Endothelial cell of umbilical vein (primary cell): ENCODE measurements at regions of chr5 and their contacts with region 1.

Region 1: GRCh38 chr5:34486160-34486848 is 169.8 kb upstream of the RAI14 start:
- DNase-seq: peak; percentile 87
- H3K4me3 ChIP-seq: no peak overlapping the region
- H3K27ac ChIP-seq: peak overlapping the region; percentile 78
- H3K4me1 ChIP-seq: peaks cover 19% of the 10 kb centered on the region
- H3K27me3 ChIP-seq: peaks cover 0 to 7% of the 10 kb centered on the region in 2 experiments
- CTCF ChIP-seq: peak; percentile 68 to 78
- POLR2A ChIP-seq: no peak

Region 2: DNA sequence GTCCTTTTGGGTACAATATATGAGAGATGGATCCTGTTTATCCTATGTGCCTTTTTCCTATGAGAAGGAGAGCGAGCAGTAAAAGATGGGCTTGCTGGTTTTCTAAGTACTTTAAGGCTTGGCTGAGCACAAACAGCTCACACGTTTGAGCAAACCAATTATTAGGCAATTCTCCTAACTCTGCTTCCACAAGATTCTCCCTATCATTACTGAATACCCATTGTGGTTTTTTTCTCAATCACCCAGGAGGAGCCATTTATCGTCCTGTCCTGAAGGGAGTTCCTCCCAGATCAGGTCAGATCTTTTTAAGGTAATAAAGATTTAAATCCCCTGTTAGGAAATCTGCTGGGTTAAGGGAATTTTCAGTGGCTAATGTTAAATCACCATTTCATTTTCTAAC is 423.9 kb before region 1 on chr5:
- CTCF ChIA-PET with region 1: no interaction called
- POLR2A ChIA-PET with region 1: no interaction called
- dilution Hi-C with region 1: no loop called
- intact Hi-C with region 1: no loop called
- DNase-seq: no peak
- H3K4me3 ChIP-seq: no peak overlapping the region
- H3K27ac ChIP-seq: no peak overlapping the region
- H3K4me1 ChIP-seq: no peaks in the 10 kb centered on the region
- H3K27me3 ChIP-seq: no peaks in the 10 kb centered on the region
- CTCF ChIP-seq: no peak
- POLR2A ChIP-seq: no peak

Region 3: GRCh38 chr5:34452170-34452830 is 34.0 kb before region 1 on chr5:
- CTCF ChIA-PET with region 1: no interaction called
- POLR2A ChIA-PET with region 1: no interaction called
- dilution Hi-C with region 1: no loop called
- intact Hi-C with region 1: no loop called
- DNase-seq: peak; percentile 9
- H3K4me3 ChIP-seq: no peak overlapping the region
- H3K27ac ChIP-seq: no peak overlapping the region
- H3K4me1 ChIP-seq: no peaks in the 10 kb centered on the region
- H3K27me3 ChIP-seq: peaks cover 16 to 19% of the 10 kb centered on the region in 2 experiments
- CTCF ChIP-seq: peak in 1 of 2 donors; percentile 40
- POLR2A ChIP-seq: no peak

Region 4: DNA sequence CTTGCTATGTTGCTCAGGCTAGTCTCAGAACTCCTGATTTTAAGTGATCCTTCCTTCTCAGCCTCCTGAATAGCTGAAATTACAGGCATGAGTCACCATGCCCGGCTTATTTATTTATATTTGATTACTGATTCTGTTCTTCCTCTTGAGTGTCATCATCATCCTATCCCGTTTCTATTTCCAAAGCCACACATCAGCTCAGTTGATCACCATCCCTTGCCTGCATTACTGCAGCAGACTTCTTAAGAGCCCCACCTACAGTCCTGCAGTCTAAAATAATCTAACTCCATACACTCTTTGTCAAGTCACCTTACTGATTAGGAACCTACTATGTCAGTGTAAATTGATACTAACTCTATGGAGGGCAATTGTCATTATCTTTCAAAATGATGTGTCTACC is 30.9 kb after region 1 on chr5:
- CTCF ChIA-PET with region 1: interaction called, 13 read pairs
- POLR2A ChIA-PET with region 1: no interaction called
- dilution Hi-C with region 1: no loop called
- intact Hi-C with region 1: loop called (anchors 1 kb)
- DNase-seq: peak; percentile 69
- H3K4me3 ChIP-seq: no peak overlapping the region
- H3K27ac ChIP-seq: peak overlapping the region; percentile 58
- H3K4me1 ChIP-seq: peaks cover 19% of the 10 kb centered on the region
- H3K27me3 ChIP-seq: no peaks in the 10 kb centered on the region
- CTCF ChIP-seq: no peak
- POLR2A ChIP-seq: no peak

Region 5: GRCh38 chr5:34587355-34588241 is 101.3 kb after region 1 on chr5:
- CTCF ChIA-PET with region 1: interaction called, 11 read pairs
- POLR2A ChIA-PET with region 1: interaction called, 3 read pairs
- dilution Hi-C with region 1: no loop called
- intact Hi-C with region 1: loop called (anchors 1 kb)
- DNase-seq: peak; percentile 70
- H3K4me3 ChIP-seq: no peak overlapping the region
- H3K27ac ChIP-seq: peak overlapping the region; percentile 99
- H3K4me1 ChIP-seq: peaks cover 60% of the 10 kb centered on the region
- H3K27me3 ChIP-seq: no peaks in the 10 kb centered on the region
- CTCF ChIP-seq: no peak
- POLR2A ChIP-seq: no peak

Region 6: GRCh38 chr5:34695275-34696027 is 209.1 kb after region 1 on chr5:
- CTCF ChIA-PET with region 1: interaction called, 4 read pairs
- POLR2A ChIA-PET with region 1: no interaction called
- dilution Hi-C with region 1: no loop called
- intact Hi-C with region 1: loop called (anchors 2 kb)
- DNase-seq: no peak
- H3K4me3 ChIP-seq: no peak overlapping the region
- H3K27ac ChIP-seq: peak overlapping the region; percentile 2
- H3K4me1 ChIP-seq: peaks cover 26% of the 10 kb centered on the region
- H3K27me3 ChIP-seq: no peaks in the 10 kb centered on the region
- CTCF ChIP-seq: no peak
- POLR2A ChIP-seq: no peak

Region 7: GRCh38 chr5:34838785-34839714 is 352.7 kb after region 1 on chr5 and contains the start of gene TTC23L:
- CTCF ChIA-PET with region 1: interaction called, 5 read pairs
- POLR2A ChIA-PET with region 1: no interaction called
- dilution Hi-C with region 1: no loop called
- intact Hi-C with region 1: loop called (anchors 2 kb)
- DNase-seq: peak; percentile 78
- H3K4me3 ChIP-seq: peak within 1 kb of the TSS; percentile 18 to 61 (median 42)
- H3K27ac ChIP-seq: no peak within 1 kb of the TSS
- H3K4me1 ChIP-seq: no peaks in the 10 kb centered on the region
- H3K27me3 ChIP-seq: no peaks in the 10 kb centered on the region
- CTCF ChIP-seq: no peak
- POLR2A ChIP-seq: no peak
- total RNA-seq, gene TTC23L: 0.25 TPM in 1 of 2 replicates, not detected in the other

Region 8: DNA sequence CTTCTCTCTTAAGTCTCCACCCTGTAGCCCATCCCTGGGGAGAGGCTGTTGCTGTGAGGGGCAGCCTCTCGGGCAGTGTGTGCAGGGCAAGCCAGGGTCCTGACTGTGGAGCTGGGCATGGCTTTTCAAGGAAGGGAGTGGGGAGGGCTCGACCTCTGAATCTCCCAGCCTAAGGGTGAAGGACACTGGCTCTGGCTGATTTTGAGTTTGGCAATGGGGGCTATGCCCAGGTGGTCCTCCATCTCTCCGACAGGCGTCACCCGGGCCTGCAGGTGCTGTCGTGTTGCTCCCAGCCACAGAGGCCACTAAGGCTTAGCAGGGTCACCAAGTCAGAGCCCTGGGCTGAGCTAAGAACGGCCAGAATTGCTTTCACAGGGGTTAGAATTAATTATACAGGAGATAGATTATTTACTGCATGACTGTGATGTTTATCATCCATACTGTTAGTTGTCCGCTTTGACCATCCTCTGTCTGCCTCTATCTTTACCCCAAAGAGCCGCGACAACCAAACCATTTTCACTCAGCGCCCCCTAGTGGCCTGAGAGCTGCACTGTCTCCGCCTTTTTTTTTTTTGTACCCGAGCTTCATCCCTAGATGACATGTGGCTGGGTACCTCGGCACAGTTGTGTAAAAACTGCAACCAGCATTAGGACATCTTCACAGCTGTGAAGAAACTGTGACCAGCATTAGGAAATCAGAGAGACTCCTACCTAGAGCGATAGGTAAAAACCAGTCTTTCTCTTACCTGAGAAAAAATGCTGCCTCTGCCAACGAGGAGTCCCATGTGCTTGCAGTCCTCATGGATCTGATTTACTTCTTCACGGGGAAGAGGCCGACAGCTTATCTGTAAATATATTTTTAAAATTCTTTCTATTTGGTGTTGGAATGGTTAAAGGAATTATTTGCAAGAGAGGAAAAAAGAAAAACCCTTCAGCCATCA is 517.0 kb after region 1 on chr5:
- CTCF ChIA-PET with region 1: interaction called, 6 read pairs
- POLR2A ChIA-PET with region 1: no interaction called
- dilution Hi-C with region 1: no loop called
- intact Hi-C with region 1: loop called (anchors 5 kb)
- DNase-seq: peak; percentile 55
- H3K4me3 ChIP-seq: no peak overlapping the region
- H3K27ac ChIP-seq: no peak overlapping the region
- H3K4me1 ChIP-seq: no peaks in the 10 kb centered on the region
- H3K27me3 ChIP-seq: peaks cover 6 to 9% of the 10 kb centered on the region in 2 experiments
- CTCF ChIP-seq: peak; percentile 88 to 90
- POLR2A ChIP-seq: no peak